HAP-1 (cell line): ENCODE measurements at regions of chr2 and their contacts with region 1.

Region 1: DNA sequence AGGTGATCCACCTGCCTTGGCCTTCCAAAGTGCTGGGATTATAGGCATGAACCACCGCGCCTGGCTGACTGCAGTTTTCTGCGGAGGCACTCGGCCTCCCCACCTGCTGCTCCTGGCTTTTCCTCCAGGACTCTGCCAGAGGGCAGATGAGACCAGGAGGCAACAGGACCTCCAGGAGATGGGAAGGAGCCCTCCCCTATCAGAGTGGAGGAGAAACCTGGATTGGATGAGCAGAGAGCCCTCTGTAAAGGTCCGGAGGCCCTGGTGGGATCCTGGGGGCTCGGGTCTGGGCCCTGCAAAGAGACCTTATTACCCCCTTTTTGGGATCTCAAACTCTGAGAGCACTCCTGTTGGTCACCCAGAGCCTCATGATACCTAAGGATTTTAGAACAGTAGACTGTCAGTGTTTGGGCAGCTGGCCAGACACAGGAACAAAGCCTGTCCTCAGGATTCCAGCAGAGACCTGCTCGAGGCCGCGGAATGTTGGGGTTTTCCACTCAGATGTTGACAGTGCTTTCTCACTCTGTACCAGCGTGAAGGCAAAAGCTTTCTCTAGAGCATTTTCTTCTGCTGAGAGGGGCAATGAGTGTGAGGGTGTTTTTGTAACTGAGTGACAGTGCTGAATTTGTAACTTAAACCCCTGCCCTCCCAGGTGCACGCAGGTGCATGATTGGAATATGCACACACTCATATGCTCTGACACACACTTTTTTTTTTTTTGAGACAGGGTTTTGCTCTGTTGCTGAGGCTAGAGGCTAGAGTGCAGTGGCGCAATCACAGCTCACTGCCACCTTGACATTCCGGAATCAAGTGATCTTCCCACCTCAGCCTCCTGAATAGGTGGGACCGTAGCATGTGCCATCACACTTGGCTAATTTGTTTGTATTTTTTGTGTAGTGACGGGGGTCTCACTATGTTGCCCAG is 48.4 kb downstream of the NPPC start:
- DNase-seq: no peak
- H3K4me3 ChIP-seq: no peak overlapping the region
- H3K4me1 ChIP-seq: no peaks in the 10 kb centered on the region
- H3K27me3 ChIP-seq: no peaks in the 10 kb centered on the region

Region 2: GRCh38 chr2:231554748-231555545 is 322.8 kb before region 1 on chr2:
- in situ Hi-C with region 1: no loop called
- DNase-seq: no peak
- H3K4me3 ChIP-seq: no peak overlapping the region
- H3K4me1 ChIP-seq: no peaks in the 10 kb centered on the region; the same call in 1 of the 2 replicates
- H3K27me3 ChIP-seq: no peaks in the 10 kb centered on the region

Region 3: GRCh38 chr2:231810905-231811304 is 66.9 kb before region 1 on chr2:
- in situ Hi-C with region 1: loop called (anchors 10 kb)
- DNase-seq: no peak
- H3K4me3 ChIP-seq: no peak overlapping the region
- H3K4me1 ChIP-seq: no peaks in the 10 kb centered on the region
- H3K27me3 ChIP-seq: no peaks in the 10 kb centered on the region